ENCODE measurements at regions of chr20 and their contacts with region 1.

Region 1: GRCh38 chr20:35453647-35454046 is 1.8 kb upstream of the CEP250 start:
- DNase-seq: no peak
- ATAC-seq: no peak
- H3K4me3 ChIP-seq: peak overlapping the region in 2 of 10 donors; percentile 80 to 99
- H3K27ac ChIP-seq: no peak overlapping the region
- H3K4me1 ChIP-seq: peaks cover 0 to 19% (median 12%) of the 10 kb centered on the region in 9 donors
- H3K27me3 ChIP-seq: no peaks in the 10 kb centered on the region
- CTCF ChIP-seq: no peak

Region 2: DNA sequence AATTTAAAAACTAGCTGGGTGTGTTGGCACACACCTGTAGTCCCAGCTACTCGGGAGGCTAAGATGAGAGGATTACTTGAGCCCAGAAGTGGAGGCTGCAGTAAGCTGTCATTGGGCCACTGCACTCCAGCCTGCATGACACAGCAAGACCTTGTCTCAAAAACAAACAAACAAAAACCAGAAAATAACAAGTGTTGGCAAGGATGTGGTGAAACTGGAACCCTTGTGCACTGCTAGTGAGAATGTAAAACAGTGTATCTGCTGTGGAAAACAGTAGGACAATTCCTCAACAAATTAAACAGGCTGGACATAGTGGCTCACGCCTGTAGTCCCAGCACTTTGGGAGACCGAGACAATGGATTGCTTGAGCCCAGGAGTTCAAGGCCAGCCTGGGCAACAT is 45.4 kb before region 1 on chr20:
- intact Hi-C with region 1: loop called in 1 of 10 experiments (anchors 2 kb)
- DNase-seq: no peak
- ATAC-seq: no peak
- H3K4me3 ChIP-seq: no peak overlapping the region
- H3K27ac ChIP-seq: no peak overlapping the region
- H3K4me1 ChIP-seq: peaks cover 0 to 23% (median 12%) of the 10 kb centered on the region in 9 donors
- H3K27me3 ChIP-seq: no peaks in the 10 kb centered on the region
- CTCF ChIP-seq: no peak

Measured in heart right ventricle (tissue), 16 donors.